Thyroid gland (tissue), 4 donors: ENCODE measurements at regions of chr10 and their contacts with region 1.

Region 1: GRCh38 chr10:94362360-94363250 is at the start of gene NOC3L:
- DNase-seq: peak; percentile 95 to 97
- H3K4me3 ChIP-seq: peak within 1 kb of the TSS; percentile 40 to 72 (median 62)
- H3K27ac ChIP-seq: peak within 1 kb of the TSS in 2 of 3 donors; percentile 50 to 53
- H3K4me1 ChIP-seq: peaks cover 12 to 16% of the 10 kb centered on the region in 2 donors
- H3K27me3 ChIP-seq: no peaks in the 10 kb centered on the region
- CTCF ChIP-seq: peak; percentile 46 to 94 (median 86)
- POLR2A ChIP-seq: peak in 1 of 2 donors; percentile 64
- total RNA-seq, gene NOC3L: 18.9 to 35.6 (median 25.4) TPM

Region 2: GRCh38 chr10:93220296-93221170 is 1142.1 kb before region 1 on chr10:
- intact Hi-C with region 1: no loop called
- DNase-seq: no peak
- H3K4me3 ChIP-seq: no peak overlapping the region
- H3K27ac ChIP-seq: no peak overlapping the region
- H3K4me1 ChIP-seq: no peaks in the 10 kb centered on the region
- H3K27me3 ChIP-seq: no peaks in the 10 kb centered on the region
- CTCF ChIP-seq: no peak
- POLR2A ChIP-seq: no peak

Region 3: DNA sequence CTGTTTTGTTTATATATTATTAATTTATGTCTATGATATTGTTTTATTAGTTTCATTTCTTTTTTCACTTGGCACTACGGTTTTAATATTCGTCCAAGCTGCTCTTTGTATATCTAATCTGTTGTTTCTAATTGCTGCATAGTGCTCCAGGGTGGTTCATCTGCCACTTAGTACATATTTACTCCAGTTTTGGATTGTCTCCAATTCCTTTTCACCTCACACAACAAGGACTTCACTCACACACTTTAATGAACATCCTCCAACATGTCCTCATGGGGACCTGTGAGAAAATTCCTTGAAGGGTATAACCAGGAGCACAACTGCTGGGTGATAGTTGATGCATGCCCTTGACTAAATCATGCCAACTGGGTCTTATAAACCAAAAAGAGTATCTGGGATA is 14.3 kb after region 1 on chr10:
- intact Hi-C with region 1: no loop called
- DNase-seq: no peak
- H3K4me3 ChIP-seq: no peak overlapping the region
- H3K27ac ChIP-seq: no peak overlapping the region
- H3K4me1 ChIP-seq: no peaks in the 10 kb centered on the region
- H3K27me3 ChIP-seq: no peaks in the 10 kb centered on the region
- CTCF ChIP-seq: no peak
- POLR2A ChIP-seq: no peak

Region 4: GRCh38 chr10:94402015-94402842 is 39.6 kb after region 1 on chr10 and contains the start of gene TBC1D12:
- intact Hi-C with region 1: loop called (anchors 5 kb)
- DNase-seq: peak; percentile 96 to 98
- H3K4me3 ChIP-seq: peak within 1 kb of the TSS; percentile 87 to 88 (median 87)
- H3K27ac ChIP-seq: peak within 1 kb of the TSS; percentile 88 to 98 (median 98)
- H3K4me1 ChIP-seq: peaks cover 7 to 10% of the 10 kb centered on the region in 2 donors
- H3K27me3 ChIP-seq: no peaks in the 10 kb centered on the region
- CTCF ChIP-seq: no peak
- POLR2A ChIP-seq: peak; percentile 58 to 79
- total RNA-seq, gene TBC1D12: 17.5 to 28.2 (median 18.7) TPM

Region 5: DNA sequence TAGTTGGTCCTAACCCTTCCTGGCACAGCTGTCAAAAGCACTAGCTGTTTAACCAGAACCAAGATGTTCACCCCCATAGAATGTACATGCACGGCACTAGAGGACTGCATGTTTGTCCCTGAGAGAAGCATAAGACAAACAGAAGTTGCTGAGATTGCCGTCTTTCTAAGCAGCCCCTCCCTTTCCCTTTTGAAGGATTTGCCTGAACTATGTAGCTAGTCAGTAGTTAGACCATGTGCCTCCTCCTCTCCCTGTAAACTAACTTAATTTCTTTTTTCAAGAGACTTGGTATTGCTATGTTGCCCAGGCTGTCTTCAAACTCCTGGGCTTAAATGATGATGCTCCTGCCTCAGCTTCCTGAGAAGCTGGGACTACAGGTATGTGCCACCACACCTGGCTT is 80.4 kb after region 1 on chr10:
- intact Hi-C with region 1: loop called (anchors 5 kb)
- DNase-seq: no peak
- H3K4me3 ChIP-seq: no peak overlapping the region
- H3K27ac ChIP-seq: no peak overlapping the region
- H3K4me1 ChIP-seq: no peaks in the 10 kb centered on the region
- H3K27me3 ChIP-seq: no peaks in the 10 kb centered on the region
- CTCF ChIP-seq: no peak
- POLR2A ChIP-seq: no peak

Region 6: GRCh38 chr10:94500063-94500462 is 137.5 kb after region 1 on chr10:
- intact Hi-C with region 1: no loop called
- DNase-seq: no peak
- H3K4me3 ChIP-seq: no peak overlapping the region
- H3K27ac ChIP-seq: no peak overlapping the region
- H3K4me1 ChIP-seq: no peaks in the 10 kb centered on the region
- H3K27me3 ChIP-seq: no peaks in the 10 kb centered on the region
- CTCF ChIP-seq: no peak
- POLR2A ChIP-seq: no peak